ENCODE measurements at regions of chr1 and their contacts with region 1.

Region 1: GRCh38 chr1:160830321-160831153 is 32.1 kb downstream of the CD244 start:
- DNase-seq: peak; percentile 61

Region 2: DNA sequence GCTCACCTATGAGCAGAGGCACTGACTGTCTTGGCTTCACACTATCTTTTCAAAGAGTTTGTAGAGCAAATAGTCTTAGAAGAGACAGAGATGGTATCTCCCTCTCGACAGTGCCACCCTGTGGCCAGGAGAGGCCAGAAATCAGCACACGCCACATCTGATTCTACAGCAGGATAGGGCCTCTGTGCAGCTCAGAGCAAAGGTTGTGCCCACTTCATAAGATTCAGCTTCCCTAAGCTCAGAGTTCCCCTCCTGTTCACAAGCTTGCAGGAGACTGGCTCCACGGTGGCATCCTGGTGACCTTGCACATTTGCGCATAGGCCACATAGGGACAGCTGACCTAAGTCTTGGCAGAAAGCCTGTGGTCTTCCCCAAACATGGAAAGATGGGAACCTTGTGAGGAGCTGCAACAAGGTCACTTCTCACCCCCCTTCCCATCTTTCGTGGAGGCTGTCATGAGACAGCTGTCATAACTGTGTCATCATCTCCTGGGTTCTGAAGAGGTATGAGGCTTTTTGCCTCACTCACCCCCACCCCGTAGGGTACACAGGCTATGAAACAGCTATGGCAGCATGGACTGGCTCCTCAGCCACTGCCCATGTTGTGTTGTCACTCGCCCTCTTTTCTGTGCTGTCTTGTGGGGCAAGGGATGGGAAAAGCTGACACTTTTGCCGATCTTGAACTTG is 121.0 kb after region 1 on chr1:
- in situ Hi-C with region 1: loop called (anchors 10 kb)
- DNase-seq: peak; percentile 83